ENCODE measurements at regions of chr15 and their contacts with region 1.

Region 1: DNA sequence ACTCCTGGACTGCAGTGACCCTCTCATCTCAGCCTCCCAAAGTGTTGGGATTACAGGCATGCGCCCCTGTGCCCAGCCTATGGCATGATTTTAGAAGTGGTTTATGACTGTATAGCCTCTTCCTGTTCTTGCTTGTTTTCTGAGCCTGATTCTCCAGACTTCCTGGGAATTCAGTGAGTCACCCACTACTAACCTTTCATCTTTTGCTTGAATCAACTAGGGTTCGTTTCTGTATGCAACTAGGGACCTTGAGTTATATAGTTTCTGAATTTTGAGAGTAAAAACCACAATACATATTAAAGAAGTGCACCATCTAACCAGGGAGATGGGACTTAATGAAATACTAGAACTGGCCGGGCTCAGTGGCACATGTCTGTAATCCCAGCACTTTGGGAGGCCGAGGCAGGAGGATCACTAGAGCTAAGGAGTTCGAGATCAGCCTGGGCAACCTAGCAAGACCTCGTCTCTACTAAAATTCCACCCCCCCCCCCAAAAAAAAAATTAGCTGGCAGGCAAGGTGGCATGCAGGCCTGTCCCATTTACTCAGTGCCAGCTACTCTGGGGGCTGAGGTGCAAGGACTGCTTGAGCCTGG is 76.0 kb downstream of the ZNF609 start:
- DNase-seq: peak; percentile 39
- H3K4me3 Mint-ChIP-seq: no peak overlapping the region
- H3K27ac Mint-ChIP-seq: peak overlapping the region; percentile 15
- H3K4me1 Mint-ChIP-seq: peaks cover 44% of the 10 kb centered on the region
- H3K27me3 Mint-ChIP-seq: no peaks in the 10 kb centered on the region

Region 2: DNA sequence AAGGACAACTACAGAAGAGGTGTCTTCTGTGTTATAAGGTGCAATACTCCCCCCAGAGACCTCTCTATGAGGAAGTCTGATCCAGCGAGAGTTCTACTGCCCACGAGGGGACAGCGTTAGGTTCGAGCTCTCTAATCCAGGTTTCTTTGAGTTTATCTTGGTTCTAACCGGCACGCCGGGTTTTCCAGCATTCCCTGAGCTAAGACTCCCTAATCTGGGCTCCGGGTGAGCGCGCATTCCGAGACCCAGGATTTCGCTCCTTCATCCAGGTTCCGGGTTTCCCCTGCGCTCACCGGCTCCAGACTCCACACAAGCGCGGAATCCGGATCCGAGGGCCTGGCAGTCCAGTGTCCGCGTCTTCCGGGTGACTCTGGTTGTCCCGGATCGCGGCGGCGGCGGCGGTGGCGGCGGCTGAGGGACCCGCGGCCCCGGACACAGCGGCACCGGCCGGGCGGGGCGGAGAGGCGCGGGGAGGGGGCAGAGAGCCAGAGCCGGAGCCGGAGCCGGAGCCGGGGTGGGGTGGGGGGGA is 76.1 kb before region 1 on chr15 and contains the start of gene ZNF609:
- CTCF ChIA-PET with region 1: no interaction called
- POLR2A ChIA-PET with region 1: no interaction called
- intact Hi-C with region 1: no loop called
- DNase-seq: peak; percentile 93
- H3K4me3 Mint-ChIP-seq: peak within 1 kb of the TSS; percentile 87
- H3K27ac Mint-ChIP-seq: peak within 1 kb of the TSS; percentile 89
- H3K4me1 Mint-ChIP-seq: peaks cover 59% of the 10 kb centered on the region
- H3K27me3 Mint-ChIP-seq: no peaks in the 10 kb centered on the region
- total RNA-seq, gene ZNF609: 38.5 to 38.7 TPM

Region 3: DNA sequence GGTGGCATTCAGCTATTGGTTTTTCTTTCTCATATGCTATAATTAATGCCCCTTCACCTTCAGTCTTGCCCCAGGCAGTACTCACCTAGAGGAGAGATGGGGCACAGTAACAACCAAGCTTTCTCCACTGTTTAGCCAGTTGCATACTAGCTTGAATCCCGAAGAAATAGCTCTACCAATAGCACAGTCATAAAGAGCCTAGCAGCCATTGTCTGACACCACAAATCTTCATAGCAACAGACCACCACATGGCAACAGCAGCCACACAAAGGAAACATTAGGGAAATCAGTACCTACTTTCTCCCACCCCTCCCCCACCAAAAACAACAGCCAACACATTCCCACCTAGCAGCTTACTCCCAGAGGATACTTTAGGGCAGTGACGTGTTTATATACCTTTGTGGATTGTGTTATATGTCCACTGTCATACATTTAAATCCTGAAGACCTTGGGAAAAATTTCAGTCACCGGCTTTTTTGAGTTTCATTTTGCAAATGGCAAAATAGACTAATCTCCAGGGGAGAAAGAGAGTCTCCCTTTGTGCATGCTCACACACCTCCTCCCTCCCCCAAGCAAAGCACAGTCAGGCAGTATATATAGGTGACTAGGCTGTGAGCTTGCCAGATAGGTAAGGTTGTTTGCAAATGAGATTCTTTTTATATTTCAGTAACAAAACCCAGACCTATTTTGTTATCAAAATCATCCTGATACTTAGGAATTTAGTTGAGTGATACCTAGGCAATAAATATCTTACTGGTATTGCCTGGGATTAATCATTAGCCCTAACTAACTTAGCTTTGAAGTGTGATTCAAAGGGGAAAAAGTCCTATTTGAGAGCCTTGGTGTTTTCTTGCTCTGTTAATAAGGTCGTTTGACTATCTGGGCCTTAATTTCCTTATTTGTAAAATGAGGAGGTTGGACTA is 98.5 kb after region 1 on chr15:
- CTCF ChIA-PET with region 1: no interaction called
- POLR2A ChIA-PET with region 1: no interaction called
- intact Hi-C with region 1: loop called (anchors 10 kb)
- DNase-seq: peak; percentile 69
- H3K4me3 Mint-ChIP-seq: no peak overlapping the region
- H3K27ac Mint-ChIP-seq: peak overlapping the region; percentile 72
- H3K4me1 Mint-ChIP-seq: peaks cover 58% of the 10 kb centered on the region
- H3K27me3 Mint-ChIP-seq: no peaks in the 10 kb centered on the region